ENCODE measurements at regions of chr6 and their contacts with region 1.

Region 1: DNA sequence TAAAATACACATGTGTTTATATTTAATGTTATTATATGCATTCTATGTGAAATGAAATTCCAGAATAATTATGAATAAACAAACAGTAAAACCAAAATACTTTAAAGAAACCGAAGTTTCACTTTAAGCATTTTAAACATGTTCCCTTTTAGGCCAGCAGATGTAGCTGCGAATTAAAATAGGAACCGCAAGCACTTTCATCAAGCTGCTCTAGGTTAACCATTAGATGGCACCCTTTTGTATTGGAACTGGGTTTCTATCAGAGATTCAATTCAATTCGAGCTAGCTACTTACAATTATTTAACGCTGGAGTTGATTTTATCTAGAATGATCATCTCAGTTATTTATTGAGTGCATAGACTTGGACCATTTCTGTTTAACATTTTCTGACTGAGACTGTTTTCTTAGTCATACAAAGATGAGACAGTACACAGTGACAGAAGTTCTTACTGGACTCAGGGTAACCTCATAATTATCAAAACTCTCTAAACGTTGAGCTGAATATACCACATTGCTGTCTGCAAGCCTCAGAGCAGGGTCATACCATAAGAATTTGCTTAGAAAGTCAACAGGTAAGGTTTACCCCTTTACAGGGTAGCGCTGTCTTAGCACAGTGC is 8.5 kb downstream of the TMEM242 start:
- DNase-seq: peak; percentile 42
- ATAC-seq: peak; percentile 96
- H3K4me3 ChIP-seq: no peak overlapping the region
- H3K27ac ChIP-seq: no peak overlapping the region
- H3K4me1 ChIP-seq: no peaks in the 10 kb centered on the region
- H3K27me3 ChIP-seq: no peaks in the 10 kb centered on the region
- CTCF ChIP-seq: peak; percentile 80 to 100 (median 91); a peak in 5 of 6 replicates
- EP300 ChIP-seq: no peak
- POLR2A ChIP-seq: no peak
- RAD21 ChIP-seq: peak; percentile 99

Region 2: GRCh38 chr6:157045831-157046454 is 268.9 kb before region 1 on chr6:
- CTCF ChIA-PET with region 1: no interaction called
- POLR2A ChIA-PET with region 1: no interaction called
- RAD21 ChIA-PET with region 1: no interaction called
- SMC1A ChIA-PET with region 1: no interaction called
- in situ Hi-C with region 1: no loop called
- intact Hi-C with region 1: no loop called
- DNase-seq: no peak
- ATAC-seq: peak; percentile 41; the same call in 2 of the 3 replicates
- H3K4me3 ChIP-seq: no peak overlapping the region
- H3K27ac ChIP-seq: no peak overlapping the region
- H3K4me1 ChIP-seq: peaks cover 10% of the 10 kb centered on the region
- H3K27me3 ChIP-seq: no peaks in the 10 kb centered on the region
- CTCF ChIP-seq: peak; percentile 36 to 49 (median 42)
- EP300 ChIP-seq: no peak
- POLR2A ChIP-seq: no peak
- RAD21 ChIP-seq: peak; percentile 51

Region 3: DNA sequence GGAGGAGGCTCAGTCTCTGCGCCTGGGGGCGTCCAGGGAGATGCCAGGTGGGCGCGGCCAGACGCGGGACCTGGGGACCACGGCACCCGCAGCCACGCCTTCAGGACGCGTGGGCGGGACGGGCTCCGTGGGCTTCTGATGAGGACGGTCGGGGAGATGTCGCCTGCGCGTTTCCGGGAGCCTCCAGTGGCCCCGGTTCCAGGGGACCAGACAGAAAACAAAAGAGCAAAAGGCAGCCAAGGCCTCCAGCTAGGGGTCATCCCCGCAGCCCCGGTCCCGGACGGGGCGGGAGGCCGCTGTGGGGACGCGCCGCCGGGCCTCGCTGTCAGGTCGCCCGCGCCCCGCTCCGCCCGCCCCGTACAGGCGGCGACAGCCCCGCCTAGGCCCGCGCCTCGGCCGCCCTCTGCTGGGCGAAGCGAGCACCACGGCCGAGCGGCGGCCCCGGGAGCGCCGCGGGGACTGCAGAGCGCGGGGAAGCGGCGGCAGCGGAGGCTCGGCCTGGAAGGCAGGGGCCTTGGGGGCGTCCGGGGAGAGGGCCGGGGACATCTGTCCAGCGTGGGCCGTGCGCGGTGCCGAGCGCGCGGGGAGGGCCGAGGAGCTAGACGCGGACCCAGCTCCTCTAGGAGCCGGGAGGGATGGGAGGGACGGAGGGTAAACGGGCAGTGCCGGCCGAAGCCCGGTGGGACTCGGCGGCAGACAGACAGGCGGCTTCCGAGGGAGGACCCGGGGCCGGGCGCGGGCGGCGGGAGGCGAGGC is 40.2 kb before region 1 on chr6:
- CTCF ChIA-PET with region 1: no interaction called
- POLR2A ChIA-PET with region 1: no interaction called
- RAD21 ChIA-PET with region 1: no interaction called
- SMC1A ChIA-PET with region 1: no interaction called
- in situ Hi-C with region 1: no loop called
- intact Hi-C with region 1: no loop called
- DNase-seq: peak; percentile 9
- ATAC-seq: peak; percentile 97
- H3K4me3 ChIP-seq: peak overlapping the region; percentile 79
- H3K27ac ChIP-seq: no peak overlapping the region
- H3K4me1 ChIP-seq: no peaks in the 10 kb centered on the region
- H3K27me3 ChIP-seq: no peaks in the 10 kb centered on the region; a peak in 1 of 4 replicates
- CTCF ChIP-seq: peak; percentile 59 to 82 (median 65); a peak in 4 of 6 replicates
- EP300 ChIP-seq: no peak
- POLR2A ChIP-seq: peak; percentile 35; the same call in 1 of the 2 replicates
- RAD21 ChIP-seq: peak; percentile 85

Region 4: DNA sequence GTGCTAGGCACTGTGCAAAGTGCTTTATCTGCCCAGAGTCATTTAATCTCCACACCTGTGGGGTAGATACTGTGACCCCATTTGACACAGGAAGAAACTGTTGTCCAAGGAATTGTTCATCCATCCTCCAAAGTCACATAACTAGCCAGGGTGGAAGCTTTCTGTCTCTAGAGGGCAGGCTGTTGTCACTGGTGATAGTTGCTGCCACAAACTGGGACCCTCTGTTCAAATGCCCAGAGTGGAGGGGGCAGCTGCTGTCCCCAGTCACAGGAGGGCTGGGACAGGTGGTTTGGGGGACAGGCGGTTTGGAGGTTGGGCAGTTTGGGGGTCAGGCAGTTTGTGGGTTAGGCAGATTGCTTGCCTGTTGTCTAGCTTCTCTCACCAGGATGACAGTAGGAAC is 24.6 kb after region 1 on chr6:
- CTCF ChIA-PET with region 1: interaction called, 69 read pairs
- POLR2A ChIA-PET with region 1: no interaction called
- RAD21 ChIA-PET with region 1: interaction called, 6 read pairs
- SMC1A ChIA-PET with region 1: interaction called, 63 read pairs
- in situ Hi-C with region 1: no loop called
- intact Hi-C with region 1: loop called (anchors 1 kb)
- DNase-seq: no peak
- ATAC-seq: peak; percentile 64
- H3K4me3 ChIP-seq: no peak overlapping the region
- H3K27ac ChIP-seq: no peak overlapping the region
- H3K4me1 ChIP-seq: no peaks in the 10 kb centered on the region
- H3K27me3 ChIP-seq: peaks cover 0 to 2% of the 10 kb centered on the region in 2 experiments; a peak in 1 of 4 replicates
- CTCF ChIP-seq: peak; percentile 14 to 48 (median 20); a peak in 3 of 6 replicates
- EP300 ChIP-seq: no peak
- POLR2A ChIP-seq: no peak
- RAD21 ChIP-seq: peak; percentile 20; the same call in 1 of the 2 replicates

Region 5: DNA sequence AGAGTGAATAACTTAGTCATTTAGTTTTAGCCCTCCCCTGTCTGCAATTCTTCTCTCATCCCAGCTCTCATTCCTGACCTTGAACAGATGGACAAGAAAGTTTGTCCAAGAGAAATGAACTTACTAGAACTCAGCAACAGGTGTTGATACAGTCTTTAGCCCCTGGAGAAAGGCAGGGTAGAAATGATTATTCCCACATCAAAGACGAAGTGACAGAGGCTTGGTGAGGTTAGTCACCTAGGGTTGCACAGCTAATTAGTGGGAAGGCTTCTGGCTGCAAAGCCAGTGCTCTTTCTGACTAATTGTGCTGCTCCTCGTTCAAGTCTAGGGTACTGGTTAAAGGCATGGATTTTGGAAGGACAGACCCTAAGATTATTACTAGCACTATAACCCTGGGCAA is 70.7 kb after region 1 on chr6:
- CTCF ChIA-PET with region 1: interaction called, 12 read pairs
- POLR2A ChIA-PET with region 1: interaction called, 4 read pairs
- RAD21 ChIA-PET with region 1: interaction called, 3 read pairs
- SMC1A ChIA-PET with region 1: interaction called, 9 read pairs
- in situ Hi-C with region 1: no loop called
- intact Hi-C with region 1: loop called (anchors 2 kb)
- DNase-seq: peak; percentile 44
- ATAC-seq: peak; percentile 45
- H3K4me3 ChIP-seq: no peak overlapping the region
- H3K27ac ChIP-seq: no peak overlapping the region
- H3K4me1 ChIP-seq: no peaks in the 10 kb centered on the region
- H3K27me3 ChIP-seq: peaks cover 0 to 4% of the 10 kb centered on the region in 2 experiments; a peak in 1 of 4 replicates
- CTCF ChIP-seq: no peak
- EP300 ChIP-seq: peak; percentile 48 to 52; a peak in 2 of 4 replicates
- POLR2A ChIP-seq: no peak
- RAD21 ChIP-seq: no peak

Region 6: GRCh38 chr6:157607317-157608109 is 292.7 kb after region 1 on chr6:
- CTCF ChIA-PET with region 1: interaction called, 29 read pairs
- POLR2A ChIA-PET with region 1: no interaction called
- RAD21 ChIA-PET with region 1: interaction called, 25 read pairs
- SMC1A ChIA-PET with region 1: interaction called, 18 read pairs
- in situ Hi-C with region 1: loop called (anchors 10 kb)
- intact Hi-C with region 1: no loop called
- DNase-seq: no peak
- ATAC-seq: peak; percentile 60
- H3K4me3 ChIP-seq: no peak overlapping the region
- H3K27ac ChIP-seq: no peak overlapping the region
- H3K4me1 ChIP-seq: no peaks in the 10 kb centered on the region; the same call in 1 of the 2 replicates
- H3K27me3 ChIP-seq: no peaks in the 10 kb centered on the region; a peak in 1 of 4 replicates
- CTCF ChIP-seq: no peak
- EP300 ChIP-seq: no peak
- POLR2A ChIP-seq: no peak
- RAD21 ChIP-seq: no peak

Region 7: DNA sequence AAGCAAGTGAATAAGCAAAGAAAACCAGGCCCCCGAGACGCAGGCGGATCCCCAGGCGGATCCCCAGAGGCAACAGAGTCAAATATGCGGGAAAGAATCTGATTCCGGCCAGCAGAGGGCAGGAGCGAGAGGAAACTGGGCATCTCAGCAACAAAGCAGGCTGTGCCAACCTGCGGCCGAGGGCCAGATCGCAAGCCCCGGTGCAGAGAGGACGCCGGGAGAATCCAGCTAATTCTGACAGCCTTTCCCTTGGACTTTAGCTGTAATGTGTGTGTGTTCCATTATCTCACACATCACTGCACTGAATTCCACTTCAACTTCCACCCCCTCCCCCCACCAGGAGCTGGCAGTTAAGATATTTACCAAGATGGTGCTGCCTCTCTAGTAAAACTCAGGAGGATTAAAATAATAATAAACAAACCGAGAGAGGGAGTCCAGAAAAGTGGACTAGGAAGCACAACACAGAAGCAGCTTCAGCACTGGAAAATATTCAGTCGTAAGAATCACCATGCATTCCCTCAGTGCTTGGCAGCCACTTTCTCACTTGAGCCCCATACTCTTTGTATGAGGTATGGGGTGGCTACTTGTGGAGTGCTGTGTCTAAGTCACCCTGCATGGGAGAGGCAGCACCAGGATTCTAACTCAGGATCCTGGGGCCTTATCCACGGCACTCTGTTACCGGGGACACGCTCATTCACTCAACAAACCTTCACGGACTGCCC is 442.1 kb after region 1 on chr6:
- CTCF ChIA-PET with region 1: interaction called, 19 read pairs
- POLR2A ChIA-PET with region 1: no interaction called
- RAD21 ChIA-PET with region 1: interaction called, 6 read pairs
- SMC1A ChIA-PET with region 1: interaction called, 3 read pairs
- in situ Hi-C with region 1: no loop called
- intact Hi-C with region 1: no loop called
- DNase-seq: no peak
- ATAC-seq: peak; percentile 71
- H3K4me3 ChIP-seq: no peak overlapping the region
- H3K27ac ChIP-seq: no peak overlapping the region
- H3K4me1 ChIP-seq: peaks cover 17% of the 10 kb centered on the region
- H3K27me3 ChIP-seq: peaks cover 0 to 3% of the 10 kb centered on the region in 2 experiments; a peak in 2 of 4 replicates
- CTCF ChIP-seq: peak; percentile 74 to 88 (median 79)
- EP300 ChIP-seq: no peak
- POLR2A ChIP-seq: no peak
- RAD21 ChIP-seq: peak; percentile 74

Region 8: DNA sequence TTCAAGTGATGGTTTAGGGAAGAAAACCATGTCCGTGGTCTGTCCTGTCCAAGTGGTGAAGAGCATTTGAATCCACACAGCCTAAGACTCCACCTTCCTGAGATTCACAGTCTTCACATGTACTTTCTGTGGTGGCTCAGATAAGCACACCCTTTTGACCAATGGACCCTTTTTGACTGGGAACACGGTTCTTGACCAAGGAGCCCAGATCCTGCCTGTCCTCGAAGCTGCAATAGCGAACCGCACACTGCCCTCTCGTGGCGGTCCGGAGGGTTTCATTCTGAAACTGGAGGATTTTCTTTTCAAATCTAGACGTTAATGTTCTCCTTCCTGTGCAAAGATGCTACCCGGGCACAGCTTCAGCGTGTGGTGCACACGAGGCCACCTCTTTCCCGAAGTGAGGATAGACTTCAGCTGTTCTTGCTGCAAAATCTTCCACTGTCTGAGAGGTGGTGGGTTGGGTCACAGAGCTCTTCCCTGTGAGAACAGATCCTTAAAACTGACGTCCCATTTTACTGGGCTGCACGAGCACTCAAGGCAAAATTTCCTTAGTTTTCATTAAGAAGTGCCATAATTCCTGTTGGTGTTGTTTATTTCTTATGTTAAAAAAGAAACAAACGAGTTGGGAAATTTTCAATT is 757.4 kb after region 1 on chr6:
- CTCF ChIA-PET with region 1: interaction called, 10 read pairs
- POLR2A ChIA-PET with region 1: no interaction called
- RAD21 ChIA-PET with region 1: interaction called, 3 read pairs
- SMC1A ChIA-PET with region 1: interaction called, 3 read pairs
- in situ Hi-C with region 1: no loop called
- intact Hi-C with region 1: loop called (anchors 10 kb)
- DNase-seq: peak; percentile 23
- ATAC-seq: peak; percentile 92
- H3K4me3 ChIP-seq: no peak overlapping the region
- H3K27ac ChIP-seq: no peak overlapping the region
- H3K4me1 ChIP-seq: no peaks in the 10 kb centered on the region
- H3K27me3 ChIP-seq: no peaks in the 10 kb centered on the region
- CTCF ChIP-seq: peak; percentile 81 to 87 (median 86)
- EP300 ChIP-seq: no peak
- POLR2A ChIP-seq: no peak
- RAD21 ChIP-seq: peak; percentile 85